Prostate gland (tissue), 2 donors: ENCODE measurements at regions of chr12 and their contacts with region 1.

Region 1: GRCh38 chr12:105382771-105383622 is 52.5 kb downstream of the C12orf75 start:
- DNase-seq: peak; percentile 30
- H3K4me3 ChIP-seq: peak overlapping the region in 1 of 2 donors; percentile 16
- H3K27ac ChIP-seq: no peak overlapping the region
- H3K4me1 ChIP-seq: no peaks in the 10 kb centered on the region
- H3K27me3 ChIP-seq: no peaks in the 10 kb centered on the region
- CTCF ChIP-seq: peak; percentile 69 to 85 (median 76)
- POLR2A ChIP-seq: no peak

Region 2: GRCh38 chr12:105107494-105108371 is 275.3 kb before region 1 on chr12 and contains the start of gene WASHC4:
- intact Hi-C with region 1: loop called (anchors 5 kb)
- DNase-seq: peak; percentile 95
- H3K4me3 ChIP-seq: peak within 1 kb of the TSS; percentile 83 to 97
- H3K27ac ChIP-seq: peak within 1 kb of the TSS; percentile 95 to 96
- H3K4me1 ChIP-seq: no peaks in the 10 kb centered on the region
- H3K27me3 ChIP-seq: no peaks in the 10 kb centered on the region
- CTCF ChIP-seq: peak in 1 of 4 experiments; percentile 22
- POLR2A ChIP-seq: peak; percentile 96
- total RNA-seq, gene WASHC4: 30.6 to 31.2 TPM

Region 3: DNA sequence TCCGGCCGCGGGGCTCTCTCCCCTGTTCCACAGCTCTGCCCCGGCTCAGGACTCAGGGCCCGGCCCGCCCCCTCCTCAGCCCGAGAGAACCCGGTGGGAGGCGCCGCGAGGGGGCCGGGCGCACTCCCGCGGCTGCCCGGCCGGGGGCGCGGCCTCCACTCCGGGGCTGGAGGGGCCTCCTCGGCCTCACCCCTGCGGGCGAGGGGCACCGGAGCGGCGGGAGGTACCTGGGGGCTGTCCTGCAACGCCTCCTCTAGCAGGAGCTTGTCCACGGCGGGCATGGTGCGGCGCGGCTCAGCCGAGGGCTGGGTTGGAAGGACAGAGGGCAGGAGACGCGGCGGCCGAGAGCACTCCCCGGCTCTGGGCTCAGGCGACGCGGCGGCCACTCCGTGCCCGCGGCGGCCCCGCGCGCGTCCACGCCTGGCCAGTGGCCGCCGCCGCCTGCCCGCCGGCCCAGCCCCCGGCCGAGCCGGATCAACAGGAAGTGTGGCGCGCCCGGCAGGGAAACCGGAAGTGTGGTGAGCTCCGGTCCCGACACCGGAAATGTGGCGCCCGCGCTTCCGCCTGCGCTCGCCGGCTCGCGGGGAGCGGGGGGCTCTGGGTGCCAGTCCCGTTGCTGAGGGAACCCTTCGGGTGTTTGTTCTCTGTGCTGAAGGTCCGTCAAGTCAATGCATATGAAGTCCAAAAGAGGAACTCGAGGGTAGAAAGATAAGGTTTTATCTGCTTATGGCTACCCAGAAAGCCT is 147.1 kb before region 1 on chr12 and contains the start of gene APPL2:
- intact Hi-C with region 1: loop called (anchors 5 kb)
- DNase-seq: peak; percentile 87
- H3K4me3 ChIP-seq: peak within 1 kb of the TSS; percentile 93
- H3K27ac ChIP-seq: peak within 1 kb of the TSS; percentile 94 to 96
- H3K4me1 ChIP-seq: no peaks in the 10 kb centered on the region
- H3K27me3 ChIP-seq: no peaks in the 10 kb centered on the region
- CTCF ChIP-seq: peak in 2 of 4 experiments; percentile 43 to 57
- POLR2A ChIP-seq: peak; percentile 85
- total RNA-seq, gene APPL2: 72.0 to 110 TPM

Region 4: GRCh38 chr12:105279460-105280056 is 103.4 kb before region 1 on chr12:
- intact Hi-C with region 1: loop called (anchors 5 kb)
- DNase-seq: no peak
- H3K4me3 ChIP-seq: no peak overlapping the region
- H3K27ac ChIP-seq: no peak overlapping the region
- H3K4me1 ChIP-seq: no peaks in the 10 kb centered on the region
- H3K27me3 ChIP-seq: no peaks in the 10 kb centered on the region
- CTCF ChIP-seq: peak; percentile 23 to 55 (median 32)
- POLR2A ChIP-seq: no peak